Activated CD8-positive, alpha-beta T cell treated with anti-CD3 and anti-CD28 coated beads for 36 hours (primary cell): ENCODE measurements at regions of chr1 and their contacts with region 1.

Region 1: GRCh38 chr1:243343970-243344937 is 88.4 kb downstream of the SDCCAG8 start:
- DNase-seq: no peak
- ATAC-seq: peak; percentile 39
- H3K4me3 Mint-ChIP-seq: no peak overlapping the region
- H3K27ac Mint-ChIP-seq: no peak overlapping the region
- H3K4me1 Mint-ChIP-seq: peaks cover 3% of the 10 kb centered on the region
- H3K27me3 Mint-ChIP-seq: no peaks in the 10 kb centered on the region
- CTCF ChIP-seq: peak; percentile 93

Region 2: DNA sequence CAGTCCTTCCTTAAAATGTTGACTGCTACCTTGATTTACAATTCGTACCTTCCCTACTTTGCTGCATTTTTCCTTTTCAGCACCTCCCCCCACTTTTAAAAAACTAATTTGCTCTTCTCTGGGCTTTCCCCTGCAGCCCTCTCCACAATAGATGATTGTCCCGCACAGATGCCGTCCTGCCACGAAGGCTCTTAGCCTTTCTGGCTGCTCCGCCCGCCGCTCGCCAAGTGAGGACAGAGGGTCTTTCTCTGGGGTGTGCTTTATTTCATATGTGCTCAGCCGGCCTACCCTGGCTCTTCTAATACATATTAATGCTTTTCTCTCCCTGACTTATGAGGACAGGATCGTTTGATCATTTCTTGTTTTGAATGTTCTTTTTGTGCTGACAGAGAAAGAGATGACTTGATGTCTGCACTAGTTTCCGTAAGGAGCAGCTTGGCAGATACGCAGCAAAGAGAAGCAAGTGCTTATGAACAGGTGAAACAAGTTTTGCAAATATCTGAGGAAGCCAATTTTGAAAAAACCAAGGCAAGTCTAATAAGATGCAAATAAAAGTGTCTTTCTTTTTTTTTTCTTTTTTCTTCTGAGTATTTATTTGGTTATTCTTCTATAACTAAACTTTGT is 27.8 kb before region 1 on chr1:
- CTCF ChIA-PET with region 1: no interaction called
- POLR2A ChIA-PET with region 1: no interaction called
- intact Hi-C with region 1: no loop called
- DNase-seq: no peak
- ATAC-seq: no peak
- H3K4me3 Mint-ChIP-seq: no peak overlapping the region
- H3K27ac Mint-ChIP-seq: no peak overlapping the region
- H3K4me1 Mint-ChIP-seq: peaks cover 2% of the 10 kb centered on the region
- H3K27me3 Mint-ChIP-seq: no peaks in the 10 kb centered on the region
- CTCF ChIP-seq: no peak

Region 3: DNA sequence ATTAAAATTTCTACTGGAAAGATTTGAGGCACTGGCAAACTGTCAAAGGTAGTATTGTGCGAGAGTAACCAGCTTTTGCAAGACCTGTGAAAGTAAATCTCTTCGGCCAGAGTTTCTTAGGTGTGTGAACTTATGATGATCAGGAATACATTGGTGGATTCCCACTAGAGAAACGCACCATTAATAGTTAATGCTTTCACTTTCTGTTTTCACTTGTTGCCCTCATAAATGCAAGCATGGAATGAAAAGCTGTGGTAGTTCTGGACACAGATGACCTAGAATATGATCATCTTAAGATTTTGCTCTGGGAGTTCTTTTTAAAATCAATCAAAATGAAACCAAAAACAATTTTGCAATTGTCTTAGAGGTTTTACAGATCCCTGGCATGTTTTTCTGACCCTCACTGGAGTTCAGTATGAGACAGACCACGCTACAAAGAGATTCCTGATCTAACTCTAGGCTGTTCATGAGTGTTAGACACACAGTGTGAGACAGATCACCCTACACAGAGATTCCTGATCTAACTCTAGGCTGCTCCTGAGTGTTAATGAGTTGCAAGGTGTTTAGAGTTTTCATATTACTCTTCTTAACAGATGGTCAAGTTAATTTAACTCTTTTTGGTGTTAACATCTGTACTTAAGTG is 10.4 kb after region 1 on chr1:
- CTCF ChIA-PET with region 1: interaction called, 10 read pairs
- POLR2A ChIA-PET with region 1: no interaction called
- intact Hi-C with region 1: no loop called
- DNase-seq: no peak
- ATAC-seq: peak; percentile 13
- H3K4me3 Mint-ChIP-seq: no peak overlapping the region
- H3K27ac Mint-ChIP-seq: no peak overlapping the region
- H3K4me1 Mint-ChIP-seq: peaks cover 15% of the 10 kb centered on the region
- H3K27me3 Mint-ChIP-seq: no peaks in the 10 kb centered on the region
- CTCF ChIP-seq: no peak

Region 4: GRCh38 chr1:243409284-243409683 is 65.0 kb after region 1 on chr1:
- CTCF ChIA-PET with region 1: interaction called, 10 read pairs
- POLR2A ChIA-PET with region 1: no interaction called
- intact Hi-C with region 1: no loop called
- DNase-seq: no peak
- ATAC-seq: no peak
- H3K4me3 Mint-ChIP-seq: no peak overlapping the region
- H3K27ac Mint-ChIP-seq: no peak overlapping the region
- H3K4me1 Mint-ChIP-seq: peaks cover 18% of the 10 kb centered on the region
- H3K27me3 Mint-ChIP-seq: no peaks in the 10 kb centered on the region
- CTCF ChIP-seq: no peak

Region 5: GRCh38 chr1:243582326-243582725 is 238.1 kb after region 1 on chr1:
- CTCF ChIA-PET with region 1: no interaction called
- POLR2A ChIA-PET with region 1: no interaction called
- intact Hi-C with region 1: no loop called
- DNase-seq: no peak
- ATAC-seq: no peak
- H3K4me3 Mint-ChIP-seq: no peak overlapping the region
- H3K27ac Mint-ChIP-seq: no peak overlapping the region
- H3K4me1 Mint-ChIP-seq: no peaks in the 10 kb centered on the region
- H3K27me3 Mint-ChIP-seq: no peaks in the 10 kb centered on the region
- CTCF ChIP-seq: no peak

Region 6: DNA sequence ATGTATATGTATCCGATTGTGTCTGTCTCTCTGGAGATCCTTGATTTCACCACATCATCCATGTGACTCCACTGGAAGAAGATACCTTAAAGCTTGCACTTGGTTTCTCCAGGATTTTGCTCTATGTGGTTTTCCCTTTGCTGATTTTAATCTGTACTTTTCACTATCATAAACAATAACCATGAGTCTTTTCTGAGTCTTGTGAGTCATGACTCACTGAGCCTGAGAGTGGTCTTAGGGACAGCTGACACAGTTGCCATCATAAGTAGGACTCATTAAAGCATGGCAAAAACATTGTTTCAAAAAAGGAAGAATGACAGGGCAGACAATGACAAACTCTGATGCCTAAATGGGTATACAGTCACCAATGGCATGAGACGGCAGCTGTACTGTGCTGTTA is 279.6 kb after region 1 on chr1:
- CTCF ChIA-PET with region 1: no interaction called
- POLR2A ChIA-PET with region 1: no interaction called
- intact Hi-C with region 1: no loop called
- DNase-seq: no peak
- ATAC-seq: no peak
- H3K4me3 Mint-ChIP-seq: no peak overlapping the region
- H3K27ac Mint-ChIP-seq: no peak overlapping the region
- H3K4me1 Mint-ChIP-seq: peaks cover 17% of the 10 kb centered on the region
- H3K27me3 Mint-ChIP-seq: no peaks in the 10 kb centered on the region
- CTCF ChIP-seq: no peak

Region 7: GRCh38 chr1:243748706-243749283 is 404.5 kb after region 1 on chr1:
- CTCF ChIA-PET with region 1: interaction called, 10 read pairs
- POLR2A ChIA-PET with region 1: no interaction called
- intact Hi-C with region 1: loop called (anchors 5 kb)
- DNase-seq: peak; percentile 8
- ATAC-seq: peak; percentile 97
- H3K4me3 Mint-ChIP-seq: no peak overlapping the region
- H3K27ac Mint-ChIP-seq: no peak overlapping the region
- H3K4me1 Mint-ChIP-seq: peaks cover 34% of the 10 kb centered on the region
- H3K27me3 Mint-ChIP-seq: no peaks in the 10 kb centered on the region
- CTCF ChIP-seq: peak; percentile 73

Region 8: DNA sequence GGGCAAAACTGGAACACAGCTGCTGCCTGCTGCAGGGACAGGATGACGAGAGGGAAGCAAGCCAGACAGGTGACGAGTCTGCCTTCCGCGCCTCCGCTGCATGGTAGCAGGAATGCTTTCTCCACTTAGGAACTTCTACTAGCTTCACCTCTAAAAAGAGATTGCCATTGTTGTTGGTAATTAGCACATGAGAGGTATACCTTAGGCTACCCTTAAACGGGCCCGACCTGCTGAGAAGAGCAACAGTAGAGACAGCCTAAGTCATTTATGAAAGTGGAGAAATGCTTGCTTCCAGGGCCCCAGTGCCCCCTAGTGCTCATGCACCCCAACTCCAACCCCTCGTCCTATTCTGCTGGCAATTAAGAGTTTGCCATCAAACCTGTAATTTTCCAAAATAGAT is 602.7 kb after region 1 on chr1:
- CTCF ChIA-PET with region 1: interaction called, 6 read pairs
- POLR2A ChIA-PET with region 1: no interaction called
- intact Hi-C with region 1: loop called (anchors 10 kb)
- DNase-seq: peak; percentile 61
- ATAC-seq: peak; percentile 77
- H3K4me3 Mint-ChIP-seq: no peak overlapping the region
- H3K27ac Mint-ChIP-seq: no peak overlapping the region
- H3K4me1 Mint-ChIP-seq: no peaks in the 10 kb centered on the region
- H3K27me3 Mint-ChIP-seq: no peaks in the 10 kb centered on the region
- CTCF ChIP-seq: peak; percentile 62

Region 9: GRCh38 chr1:244272471-244273261 is 928.4 kb after region 1 on chr1:
- CTCF ChIA-PET with region 1: interaction called, 10 read pairs
- POLR2A ChIA-PET with region 1: no interaction called
- intact Hi-C with region 1: loop called (anchors 5 kb)
- DNase-seq: peak; percentile 77
- ATAC-seq: peak; percentile 97
- H3K4me3 Mint-ChIP-seq: no peak overlapping the region
- H3K27ac Mint-ChIP-seq: no peak overlapping the region
- H3K4me1 Mint-ChIP-seq: peaks cover 11% of the 10 kb centered on the region
- H3K27me3 Mint-ChIP-seq: peaks cover 3% of the 10 kb centered on the region
- CTCF ChIP-seq: peak; percentile 97